ENCODE measurements at regions of chr3 and their contacts with region 1.

Region 1: DNA sequence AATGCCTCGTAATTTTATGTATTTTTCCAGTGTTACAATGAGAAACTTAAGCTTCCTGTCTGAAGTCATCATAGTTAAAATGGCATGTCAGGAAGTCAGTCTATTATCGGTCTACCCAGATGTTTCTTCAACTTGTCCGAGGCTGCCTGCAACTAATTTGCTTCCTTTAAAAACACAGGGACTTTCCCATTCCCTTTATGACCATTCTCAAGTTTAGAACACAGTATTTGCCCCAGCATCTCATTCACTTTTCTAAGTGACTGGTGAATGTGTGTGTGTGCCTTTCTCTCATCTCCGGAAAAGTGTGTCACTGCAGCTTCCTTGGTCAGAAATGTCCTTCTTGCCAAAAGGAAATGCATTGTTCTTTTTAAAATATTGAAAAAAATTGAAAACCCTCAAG is 466.6 kb downstream of the RAP2B start:
- DNase-seq: peak; percentile 63
- H3K4me3 Mint-ChIP-seq: peak overlapping the region; percentile 23
- H3K27ac Mint-ChIP-seq: peak overlapping the region; percentile 71
- H3K4me1 Mint-ChIP-seq: peaks cover 60% of the 10 kb centered on the region
- H3K27me3 Mint-ChIP-seq: no peaks in the 10 kb centered on the region

Region 2: GRCh38 chr3:153138276-153139210 is 490.0 kb before region 1 on chr3:
- intact Hi-C with region 1: loop called (anchors 1 kb)
- DNase-seq: peak; percentile 80
- H3K4me3 Mint-ChIP-seq: peak overlapping the region; percentile 25
- H3K27ac Mint-ChIP-seq: peak overlapping the region; percentile 76
- H3K4me1 Mint-ChIP-seq: peaks cover 24% of the 10 kb centered on the region
- H3K27me3 Mint-ChIP-seq: peaks cover 3% of the 10 kb centered on the region

Region 3: DNA sequence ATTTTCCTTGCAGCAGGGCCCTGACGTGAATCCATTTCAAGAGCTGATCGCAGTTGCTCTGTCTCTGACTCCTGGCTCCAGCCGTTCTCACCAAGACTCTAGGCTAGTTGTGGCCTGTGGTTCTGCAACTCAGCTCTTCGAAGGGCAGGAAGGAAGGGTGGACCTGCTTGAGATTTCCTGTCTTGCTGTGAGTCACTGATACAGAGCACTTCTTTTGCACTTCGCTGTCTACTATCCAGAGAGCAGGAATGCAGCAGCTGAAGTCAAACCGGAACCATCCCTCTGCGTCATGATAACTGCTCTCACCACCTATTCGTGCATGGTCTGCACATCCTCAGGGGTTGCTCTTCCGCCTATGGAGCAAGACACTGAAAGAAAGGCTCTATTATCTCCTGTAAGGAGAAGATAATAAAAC is 406.8 kb before region 1 on chr3:
- intact Hi-C with region 1: loop called (anchors 5 kb)
- DNase-seq: peak; percentile 93
- H3K4me3 Mint-ChIP-seq: peak overlapping the region; percentile 73
- H3K27ac Mint-ChIP-seq: peak overlapping the region; percentile 97
- H3K4me1 Mint-ChIP-seq: peaks cover 46% of the 10 kb centered on the region
- H3K27me3 Mint-ChIP-seq: no peaks in the 10 kb centered on the region

Region 4: GRCh38 chr3:153673853-153674252 is 45.3 kb after region 1 on chr3:
- intact Hi-C with region 1: loop called (anchors 1 kb)
- DNase-seq: no peak
- H3K4me3 Mint-ChIP-seq: no peak overlapping the region
- H3K27ac Mint-ChIP-seq: peak overlapping the region; percentile 2
- H3K4me1 Mint-ChIP-seq: peaks cover 10% of the 10 kb centered on the region
- H3K27me3 Mint-ChIP-seq: peaks cover 3% of the 10 kb centered on the region

Region 5: GRCh38 chr3:154235330-154235729 is 606.7 kb after region 1 on chr3:
- intact Hi-C with region 1: loop called (anchors 1 kb)
- DNase-seq: no peak
- H3K4me3 Mint-ChIP-seq: no peak overlapping the region
- H3K27ac Mint-ChIP-seq: no peak overlapping the region
- H3K4me1 Mint-ChIP-seq: peaks cover 9% of the 10 kb centered on the region
- H3K27me3 Mint-ChIP-seq: peaks cover 2% of the 10 kb centered on the region

Measured in activated CD4-positive, alpha-beta T cell treated with anti-CD3 and anti-CD28 coated beads, Interleukin-2, amount 10 ng/mL, durations not matched to agents 24 days and 14 days (primary cell).